ENCODE measurements at regions of chr11 and their contacts with region 1.

Region 1: GRCh38 chr11:120511116-120511819 is at the start of gene GRIK4:
- DNase-seq: peak; percentile 88
- ATAC-seq: peak; percentile 86 to 88
- total RNA-seq, gene GRIK4: 0.35 to 0.55 TPM

Region 2: DNA sequence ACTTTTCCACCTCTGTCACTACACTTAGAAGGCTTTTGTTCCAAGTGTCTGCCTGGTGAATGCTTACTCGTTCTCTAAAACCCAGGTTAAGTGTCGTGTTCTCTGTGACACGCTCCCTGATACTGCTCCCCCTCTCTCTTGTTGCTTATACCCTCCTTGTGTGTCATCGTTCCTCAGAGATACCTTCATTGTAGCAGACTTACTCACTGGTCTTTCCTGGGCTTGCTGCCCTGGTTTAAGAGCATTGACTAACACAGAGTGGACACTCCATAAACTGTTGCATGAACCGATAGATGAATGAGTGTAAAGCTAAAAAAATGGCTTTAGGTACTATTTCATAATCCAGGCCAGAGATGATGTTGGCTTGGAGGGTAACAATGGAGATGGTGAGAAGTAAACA is 171.6 kb after region 1 on chr11:
- intact Hi-C with region 1: loop called (anchors 1 to 5 kb)
- DNase-seq: no peak
- ATAC-seq: no peak

Region 3: GRCh38 chr11:120801801-120802689 is 290.8 kb after region 1 on chr11:
- intact Hi-C with region 1: loop called (anchors 5 kb)
- DNase-seq: peak; percentile 68
- ATAC-seq: peak; percentile 65 to 77

Region 4: GRCh38 chr11:120952461-120953434 is 441.5 kb after region 1 on chr11:
- intact Hi-C with region 1: loop called (anchors 1 to 5 kb)
- DNase-seq: peak; percentile 73
- ATAC-seq: peak; percentile 90 to 93

Region 5: DNA sequence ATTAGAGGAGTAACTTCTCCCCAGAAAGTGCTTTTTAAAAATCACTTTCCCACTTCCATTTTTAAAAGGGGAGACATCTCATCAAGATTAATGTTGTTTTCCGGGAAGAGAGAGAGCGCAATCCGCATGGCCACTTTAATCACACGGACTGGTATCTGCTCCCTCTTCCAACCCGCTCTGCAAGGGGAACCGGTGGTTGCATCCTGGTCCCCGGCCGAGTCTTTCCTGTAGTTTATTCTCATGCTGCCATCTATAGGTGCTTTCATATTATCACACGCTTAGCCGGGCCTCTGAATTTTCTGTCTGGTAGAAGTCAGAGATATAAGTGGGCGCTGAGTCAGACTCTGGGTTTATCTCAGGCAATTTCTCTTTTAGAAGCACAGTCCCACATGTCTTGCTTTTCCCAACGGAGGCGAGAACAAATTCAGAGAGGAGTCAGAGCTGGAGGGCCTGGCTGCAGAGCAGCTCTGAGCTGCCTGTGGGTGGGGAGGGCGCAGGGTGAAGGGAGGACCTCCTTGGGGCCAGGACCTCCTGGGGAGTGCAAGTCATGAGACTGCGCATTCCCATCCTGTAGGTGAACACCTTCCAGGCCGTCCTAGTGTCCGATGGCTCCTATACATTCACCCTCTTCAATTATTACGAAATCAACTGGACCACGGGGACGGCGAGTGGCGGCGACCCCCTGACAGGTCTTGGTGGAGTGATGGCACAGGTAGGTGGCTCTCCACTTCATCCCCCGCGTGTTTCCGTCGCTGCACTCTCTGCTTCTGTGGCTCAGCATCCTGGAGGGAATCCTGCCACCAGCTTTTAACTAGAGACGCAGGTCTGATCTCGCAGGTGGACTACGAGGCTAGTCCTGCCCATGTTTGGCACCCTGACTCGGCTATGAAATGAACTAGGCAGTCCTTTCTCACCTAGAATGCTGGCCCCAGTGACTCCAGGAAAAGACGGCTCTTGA is 601.5 kb after region 1 on chr11:
- intact Hi-C with region 1: loop called in 1 of 2 experiments (anchors 10 kb)
- DNase-seq: peak; percentile 77
- ATAC-seq: peak; percentile 84 to 95